ENCODE measurements at regions of chr7 and their contacts with region 1.

Region 1: GRCh38 chr7:99447943-99448342 is 9.2 kb downstream of the CPSF4 start:
- DNase-seq: no peak

Region 2: DNA sequence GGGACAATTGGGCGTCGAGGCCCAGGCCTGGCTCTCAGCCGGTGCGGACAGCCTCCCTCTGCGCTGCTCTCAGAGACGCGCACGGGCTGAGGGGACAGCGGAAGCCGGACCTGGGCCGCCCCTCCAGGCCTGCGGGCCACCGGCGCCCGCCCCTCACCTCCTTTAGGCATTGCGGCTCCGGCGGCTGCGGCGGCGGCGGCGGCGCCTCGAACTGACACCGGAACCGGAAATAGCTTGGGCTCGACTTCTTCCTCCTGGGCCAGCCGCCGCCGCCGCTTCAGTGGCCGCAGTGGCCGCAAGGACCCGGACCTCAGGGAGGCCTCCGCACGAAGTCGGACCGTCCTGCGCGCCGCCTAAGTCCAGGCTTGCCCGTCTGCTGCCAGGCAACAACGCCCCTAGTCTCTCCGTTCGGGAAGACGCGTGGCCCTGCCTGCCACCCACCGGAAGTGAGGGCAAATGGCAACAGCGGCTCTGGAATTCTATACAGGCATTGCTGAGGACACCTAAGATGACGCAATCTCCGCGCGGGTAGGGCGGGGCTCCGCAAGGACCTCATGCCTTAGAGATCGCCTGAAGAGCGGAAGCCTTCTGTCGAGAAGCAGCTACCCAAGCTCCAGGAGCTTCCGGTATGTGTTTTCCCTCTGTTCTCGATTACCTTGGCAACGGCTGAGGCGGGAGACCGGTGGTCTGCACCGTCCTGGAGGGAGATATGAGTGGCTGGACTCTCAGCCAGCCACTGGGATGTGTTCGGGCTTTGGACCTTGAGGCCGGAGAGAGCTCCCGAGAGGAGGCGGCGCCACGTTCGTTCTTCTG is 39.4 kb before region 1 on chr7 and contains the starts of genes BUD31 and PDAP1:
- intact Hi-C with region 1: loop called in 1 of 2 experiments (anchors 5 kb)
- DNase-seq: peak; percentile 98
- total RNA-seq, gene BUD31: 48.2 to 57.1 TPM
- total RNA-seq, gene PDAP1: 84.1 to 95.6 TPM

Region 3: DNA sequence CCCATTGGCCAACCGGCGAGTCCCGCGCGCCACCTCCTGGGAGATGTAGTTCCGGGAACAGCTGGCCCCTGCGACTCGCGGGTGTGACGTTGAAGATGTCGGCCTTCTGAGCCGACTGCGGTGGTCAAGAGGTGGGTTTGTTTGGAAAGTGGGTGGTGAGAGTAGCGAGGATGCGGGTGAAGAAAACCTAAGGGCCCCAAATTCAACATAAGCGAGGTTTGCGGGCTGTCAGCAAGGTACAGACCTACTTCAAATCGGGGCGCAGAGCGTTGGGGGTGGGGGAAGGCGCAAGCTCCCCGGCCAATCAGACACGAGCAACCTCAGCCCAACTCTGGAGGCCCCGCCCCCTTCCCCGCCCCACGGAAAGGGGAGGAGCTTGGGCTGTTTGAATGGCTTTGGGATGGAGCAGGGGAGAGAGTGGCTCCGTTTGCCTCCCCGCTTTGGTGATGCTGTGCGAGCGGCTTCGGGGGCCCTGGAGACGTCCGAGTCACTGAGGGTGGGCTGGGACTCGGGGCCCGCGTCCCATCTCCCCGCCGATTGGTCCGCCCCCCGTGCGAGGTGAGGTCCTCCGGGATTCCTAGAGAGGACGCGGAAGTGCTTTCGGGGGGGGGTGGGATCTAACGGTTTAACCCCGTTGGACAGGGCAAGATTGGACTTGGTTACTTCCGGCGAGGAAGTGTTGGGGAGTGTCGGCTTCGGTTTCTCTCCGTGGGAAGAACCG is 56.8 kb after region 1 on chr7 and contains the start of gene ZKSCAN5:
- intact Hi-C with region 1: loop called in 1 of 2 experiments (anchors 2 kb)
- DNase-seq: peak; percentile 100
- total RNA-seq, gene ZKSCAN5: 5.9 to 7.0 TPM

Measured in posterior vena cava (tissue), 2 donors.